ENCODE measurements at regions of chr11 and their contacts with region 1.

Region 1: DNA sequence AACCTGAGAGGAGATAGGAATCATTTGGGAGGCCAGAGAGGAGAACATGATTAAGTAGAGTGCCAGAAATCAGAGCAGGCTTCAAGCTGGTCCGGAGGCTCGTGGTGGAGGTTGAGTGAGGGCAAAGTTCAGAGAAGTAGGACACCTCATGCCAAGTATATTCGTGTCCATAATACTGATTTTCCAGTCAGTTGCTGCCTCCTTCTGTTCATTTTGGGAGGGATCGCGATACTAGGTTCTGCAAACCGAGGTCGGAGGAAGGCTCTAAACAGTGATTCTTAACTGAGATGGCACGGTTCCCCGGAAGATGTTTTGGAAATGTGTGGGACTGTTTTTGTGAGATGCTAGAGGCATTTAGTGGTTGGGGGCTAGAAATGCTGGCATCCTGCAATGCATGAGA is 13.6 kb upstream of the CD3E start:
- DNase-seq: peak; percentile 46 to 61 (median 49)
- H3K4me3 ChIP-seq: no peak overlapping the region
- H3K4me3 Mint-ChIP-seq: peak overlapping the region in 1 of 8 donors; percentile 40
- H3K27ac ChIP-seq: no peak overlapping the region
- H3K27ac Mint-ChIP-seq: peak overlapping the region in 2 of 7 donors; percentile 18 to 36
- H3K4me1 ChIP-seq: peaks cover 4% of the 10 kb centered on the region
- H3K4me1 Mint-ChIP-seq: peaks cover 8 to 13% (median 10%) of the 10 kb centered on the region in 4 donors
- H3K27me3 ChIP-seq: no peaks in the 10 kb centered on the region
- H3K27me3 Mint-ChIP-seq: no peaks in the 10 kb centered on the region

Region 2: GRCh38 chr11:118277306-118277705 is 13.6 kb before region 1 on chr11:
- CTCF ChIA-PET with region 1: interaction called, 11 read pairs
- POLR2A ChIA-PET with region 1: interaction called, 3 read pairs
- intact Hi-C with region 1: no loop called
- DNase-seq: no peak
- H3K4me3 ChIP-seq: no peak overlapping the region
- H3K4me3 Mint-ChIP-seq: no peak overlapping the region
- H3K27ac ChIP-seq: no peak overlapping the region
- H3K27ac Mint-ChIP-seq: peak overlapping the region in 1 of 7 donors; percentile 45
- H3K4me1 ChIP-seq: peaks cover 10% of the 10 kb centered on the region
- H3K4me1 Mint-ChIP-seq: peaks cover 10 to 24% (median 17%) of the 10 kb centered on the region in 4 donors
- H3K27me3 ChIP-seq: no peaks in the 10 kb centered on the region
- H3K27me3 Mint-ChIP-seq: no peaks in the 10 kb centered on the region

Region 3: DNA sequence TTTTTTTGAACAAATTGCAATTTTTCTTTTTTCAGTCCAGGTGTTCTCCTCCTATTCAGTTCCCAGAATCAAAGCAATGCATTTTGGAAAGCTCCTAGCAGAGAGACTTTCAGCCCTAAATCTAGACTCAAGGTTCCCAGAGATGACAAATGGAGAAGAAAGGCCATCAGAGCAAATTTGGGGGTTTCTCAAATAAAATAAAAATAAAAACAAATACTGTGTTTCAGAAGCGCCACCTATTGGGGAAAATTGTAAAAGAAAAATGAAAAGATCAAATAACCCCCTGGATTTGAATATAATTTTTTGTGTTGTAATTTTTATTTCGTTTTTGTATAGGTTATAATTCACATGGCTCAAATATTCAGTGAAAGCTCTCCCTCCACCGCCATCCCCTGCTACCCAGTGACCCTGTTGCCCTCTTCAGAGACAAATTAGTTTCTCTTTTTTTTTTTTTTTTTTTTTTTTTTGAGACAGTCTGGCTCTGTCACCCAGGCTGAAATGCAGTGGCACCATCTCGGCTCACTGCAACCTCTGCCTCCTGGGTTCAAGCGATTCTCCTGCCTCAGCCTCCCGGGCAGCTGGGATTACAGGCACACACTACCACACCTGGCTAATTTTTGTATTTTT is 62.3 kb after region 1 on chr11:
- CTCF ChIA-PET with region 1: interaction called, 20 read pairs
- POLR2A ChIA-PET with region 1: no interaction called
- intact Hi-C with region 1: loop called (anchors 1 kb)
- DNase-seq: peak in 4 of 5 donors; percentile 53 to 64 (median 63)
- H3K4me3 ChIP-seq: no peak overlapping the region
- H3K4me3 Mint-ChIP-seq: no peak overlapping the region
- H3K27ac ChIP-seq: peak overlapping the region; percentile 44
- H3K27ac Mint-ChIP-seq: peak overlapping the region; percentile 86 to 96 (median 93)
- H3K4me1 ChIP-seq: peaks cover 22% of the 10 kb centered on the region
- H3K4me1 Mint-ChIP-seq: peaks cover 22 to 29% (median 24%) of the 10 kb centered on the region in 4 donors
- H3K27me3 ChIP-seq: no peaks in the 10 kb centered on the region
- H3K27me3 Mint-ChIP-seq: no peaks in the 10 kb centered on the region

Measured in CD4-positive, alpha-beta memory T cell (primary cell).